RWPE1 (cell line): ENCODE measurements at regions of chr1 and their contacts with region 1.

Region 1: DNA sequence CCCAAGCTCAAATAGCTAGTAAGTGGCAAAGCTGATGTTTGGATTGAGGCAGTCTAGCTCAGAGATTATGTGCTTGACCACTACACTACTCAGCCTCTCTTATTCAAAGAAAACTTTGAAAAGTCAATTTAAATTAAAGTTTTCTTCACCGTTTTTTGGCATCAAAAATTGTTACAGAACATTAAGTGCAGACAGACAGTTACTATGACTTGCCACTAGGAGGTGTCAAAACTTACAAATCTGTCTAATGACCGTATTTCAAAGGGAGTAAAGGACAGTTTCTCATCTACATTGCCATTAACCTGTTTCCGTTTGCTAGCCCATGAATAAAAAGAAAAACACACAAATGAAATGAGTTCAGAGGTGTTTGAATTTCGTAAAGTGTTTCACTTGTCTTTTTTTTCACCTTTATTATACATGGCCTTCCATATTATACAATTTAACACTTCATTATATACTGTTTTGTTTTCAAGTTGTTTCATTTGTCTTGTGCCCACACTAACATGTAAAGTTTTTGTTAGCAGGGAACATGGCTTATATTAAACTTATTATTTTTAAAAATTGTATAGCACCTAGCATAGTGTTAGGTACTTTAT is 57.4 kb upstream of the MTF2 start:
- DNase-seq: peak; percentile 44
- H3K27ac ChIP-seq: no peak overlapping the region
- CTCF ChIP-seq: peak; percentile 83

Region 2: DNA sequence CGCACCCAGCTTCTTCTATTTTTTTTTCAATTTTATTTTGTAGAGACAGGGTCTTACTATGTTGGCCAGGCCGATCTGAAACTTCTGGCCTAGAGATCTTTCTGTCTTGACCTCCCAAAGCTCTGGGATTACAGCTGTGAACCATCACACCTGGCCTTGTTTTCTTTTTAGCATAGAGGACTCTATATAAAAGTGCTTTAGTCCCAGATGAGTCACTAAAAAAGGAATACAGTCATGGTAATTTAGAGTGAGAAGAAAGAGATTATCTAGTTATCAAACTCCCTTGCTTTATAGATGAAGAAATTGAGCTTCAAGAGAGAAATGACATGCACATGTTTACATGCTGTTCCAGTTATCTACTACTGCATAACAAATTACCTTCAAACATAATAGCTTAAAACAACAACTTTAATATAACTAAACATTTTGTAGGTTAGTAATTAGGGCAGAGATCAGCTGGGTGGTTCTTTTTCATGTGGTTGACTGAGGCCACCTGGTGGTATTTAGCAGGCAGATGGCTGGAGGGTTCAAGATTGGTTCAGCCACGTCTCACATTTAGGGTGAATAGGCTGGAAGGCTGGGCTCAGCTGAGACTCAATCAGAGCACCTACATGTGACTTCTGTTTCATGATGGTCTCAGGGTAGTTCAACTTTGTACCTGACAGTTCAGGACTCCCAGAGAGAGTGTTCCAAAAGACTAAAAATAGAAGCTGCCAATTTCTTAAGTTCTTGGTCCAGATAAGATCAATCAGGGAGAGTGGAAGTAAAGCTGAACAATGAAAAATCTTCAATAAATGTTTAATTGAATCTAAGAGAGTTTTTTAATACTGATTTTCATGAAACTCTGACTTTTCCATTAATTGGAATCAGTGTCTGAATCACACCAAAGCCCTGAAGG is 40.5 kb after region 1 on chr1:
- CTCF ChIA-PET with region 1: interaction called, 16 read pairs
- POLR2A ChIA-PET with region 1: no interaction called
- DNase-seq: peak; percentile 36
- H3K27ac ChIP-seq: no peak overlapping the region
- CTCF ChIP-seq: peak; percentile 50